Psoas muscle (tissue), 8 donors: ENCODE measurements at regions of chr14 and their contacts with region 1.

Region 1: DNA sequence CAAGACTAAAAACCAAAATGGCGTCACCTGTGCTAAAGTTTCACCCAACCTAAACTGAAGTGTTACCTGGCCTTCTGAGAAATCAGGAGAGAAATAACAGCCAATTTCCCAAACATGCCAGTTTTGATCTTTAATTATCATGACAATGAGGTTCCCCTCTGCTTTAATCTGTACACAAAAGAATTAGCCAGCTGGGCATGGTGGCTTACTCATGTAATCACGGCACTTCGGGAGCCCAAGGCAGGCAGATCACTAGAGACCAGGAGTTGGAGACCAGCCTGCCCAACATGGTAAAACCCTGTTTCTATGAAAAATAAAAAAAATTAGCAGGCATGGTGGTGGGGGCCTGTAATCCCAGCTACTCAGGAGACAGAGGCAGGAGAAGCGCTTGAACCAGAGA is 4.9 kb downstream of the HEATR4 start:
- DNase-seq: no peak
- ATAC-seq: no peak
- H3K4me3 ChIP-seq: no peak overlapping the region
- H3K27ac ChIP-seq: no peak overlapping the region
- H3K4me1 ChIP-seq: no peaks in the 10 kb centered on the region
- H3K27me3 ChIP-seq: no peaks in the 10 kb centered on the region
- CTCF ChIP-seq: no peak

Region 2: GRCh38 chr14:73589116-73589515 is 35.3 kb after region 1 on chr14:
- intact Hi-C with region 1: loop called in 1 of 2 experiments (anchors 5 kb)
- DNase-seq: no peak
- ATAC-seq: no peak
- H3K4me3 ChIP-seq: no peak overlapping the region
- H3K27ac ChIP-seq: no peak overlapping the region
- H3K4me1 ChIP-seq: no peaks in the 10 kb centered on the region
- H3K27me3 ChIP-seq: no peaks in the 10 kb centered on the region
- CTCF ChIP-seq: no peak